Activated CD4-positive, alpha-beta memory T cell treated with anti-CD3 and anti-CD28 coated beads for 36 hours (primary cell): ENCODE measurements at regions of chr14 and their contacts with region 1.

Region 1: DNA sequence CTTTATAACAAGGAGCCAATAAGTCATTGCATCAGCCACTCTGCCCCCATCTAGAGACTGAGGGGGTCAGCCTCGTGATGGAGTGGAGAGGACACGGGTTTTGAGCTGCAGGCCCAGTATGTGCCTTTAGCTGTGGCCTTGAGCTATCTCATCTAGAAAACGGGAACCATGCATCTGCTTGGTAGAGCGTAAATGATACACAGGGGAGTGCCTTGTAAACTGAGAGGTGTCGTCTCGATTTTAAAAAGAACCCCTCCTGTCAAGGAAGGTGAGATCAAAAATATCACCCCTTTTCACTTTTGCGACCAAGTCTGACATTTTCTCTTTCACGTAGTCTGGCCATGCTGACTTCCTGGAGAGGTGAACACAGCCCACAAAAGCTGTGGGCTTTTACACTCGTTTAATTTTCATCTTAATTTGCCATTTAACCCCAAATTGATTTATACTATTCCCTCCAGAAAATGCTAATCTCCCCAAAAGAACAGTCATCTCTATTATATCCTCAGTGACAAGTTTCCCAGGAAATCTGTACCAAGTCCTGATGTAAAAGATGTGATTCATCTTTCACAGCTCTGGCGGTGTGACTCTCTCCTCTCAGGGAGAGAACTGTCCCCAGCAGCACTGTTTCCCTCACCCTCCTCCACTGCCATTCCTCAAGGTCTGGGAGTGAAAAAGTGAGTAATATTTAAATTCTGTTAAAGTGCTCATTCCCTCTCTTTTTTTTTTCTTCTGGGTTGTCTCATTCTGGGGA is 30.6 kb downstream of the VCPKMT start:
- DNase-seq: peak; percentile 70
- H3K4me3 Mint-ChIP-seq: peak overlapping the region; percentile 30
- H3K27ac Mint-ChIP-seq: peak overlapping the region; percentile 91
- H3K4me1 Mint-ChIP-seq: peaks cover 92% of the 10 kb centered on the region
- H3K27me3 Mint-ChIP-seq: no peaks in the 10 kb centered on the region

Region 2: GRCh38 chr14:49852301-49853157 is 233.2 kb before region 1 on chr14 and contains the start of gene NEMF:
- CTCF ChIA-PET with region 1: interaction called, 11 read pairs
- POLR2A ChIA-PET with region 1: interaction called, 5 read pairs
- intact Hi-C with region 1: no loop called
- DNase-seq: peak; percentile 88
- H3K4me3 Mint-ChIP-seq: peak within 1 kb of the TSS; percentile 98
- H3K27ac Mint-ChIP-seq: peak within 1 kb of the TSS; percentile 95
- H3K4me1 Mint-ChIP-seq: peaks cover 39% of the 10 kb centered on the region
- H3K27me3 Mint-ChIP-seq: no peaks in the 10 kb centered on the region
- total RNA-seq, gene NEMF: 63.6 to 71.0 TPM

Region 3: DNA sequence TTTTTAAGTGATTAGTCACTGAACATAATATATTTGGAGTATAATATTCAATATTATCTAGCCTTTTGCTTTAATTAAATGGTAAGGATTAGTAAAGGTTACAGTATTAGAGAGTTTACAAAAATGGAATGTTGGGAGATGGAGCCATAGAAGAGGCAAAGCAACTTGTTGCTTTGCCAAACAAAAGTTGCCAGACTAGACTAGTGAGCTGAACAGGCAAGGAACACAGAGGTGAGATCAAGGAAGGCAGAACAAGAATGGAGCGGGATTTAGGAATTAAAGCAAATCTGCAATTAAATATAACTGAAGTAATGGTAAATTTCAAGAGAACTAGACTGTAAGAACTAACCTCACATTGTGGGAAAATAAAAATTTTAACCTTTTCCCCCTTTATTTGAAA is 187.8 kb before region 1 on chr14:
- CTCF ChIA-PET with region 1: interaction called, 4 read pairs
- POLR2A ChIA-PET with region 1: interaction called, 15 read pairs
- intact Hi-C with region 1: loop called (anchors 1 kb)
- DNase-seq: no peak
- H3K4me3 Mint-ChIP-seq: peak overlapping the region; percentile 75
- H3K27ac Mint-ChIP-seq: peak overlapping the region; percentile 93
- H3K4me1 Mint-ChIP-seq: peaks cover 29% of the 10 kb centered on the region
- H3K27me3 Mint-ChIP-seq: no peaks in the 10 kb centered on the region

Region 4: DNA sequence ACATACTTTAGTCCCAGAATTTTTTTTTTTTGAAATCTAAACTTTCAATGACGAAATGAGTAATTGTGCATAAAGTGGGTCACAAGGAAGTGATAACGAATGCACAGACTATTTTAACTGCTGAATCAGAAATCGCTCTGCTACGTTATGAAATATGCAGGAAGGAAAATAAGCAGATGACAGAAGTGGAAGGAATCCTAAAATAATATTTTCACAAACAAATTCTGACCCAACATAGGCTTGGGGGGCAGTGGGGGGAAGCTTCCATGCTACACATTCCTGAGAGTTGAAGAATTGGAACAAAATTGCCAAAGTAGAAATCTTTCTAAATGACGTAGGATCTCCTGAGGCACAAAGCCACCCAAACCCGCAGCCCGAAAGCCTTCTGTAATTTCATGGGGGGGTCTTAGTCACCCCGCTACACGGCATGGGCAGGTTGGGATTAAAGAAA is 103.2 kb before region 1 on chr14:
- CTCF ChIA-PET with region 1: no interaction called
- POLR2A ChIA-PET with region 1: interaction called, 6 read pairs
- intact Hi-C with region 1: loop called (anchors 1 kb)
- DNase-seq: peak; percentile 44
- H3K4me3 Mint-ChIP-seq: peak overlapping the region; percentile 54
- H3K27ac Mint-ChIP-seq: peak overlapping the region; percentile 82
- H3K4me1 Mint-ChIP-seq: peaks cover 81% of the 10 kb centered on the region
- H3K27me3 Mint-ChIP-seq: no peaks in the 10 kb centered on the region

Region 5: GRCh38 chr14:50060871-50061663 is 24.7 kb before region 1 on chr14:
- CTCF ChIA-PET with region 1: interaction called, 27 read pairs
- POLR2A ChIA-PET with region 1: interaction called, 82 read pairs
- intact Hi-C with region 1: loop called (anchors 1 kb)
- DNase-seq: peak; percentile 71
- H3K4me3 Mint-ChIP-seq: peak overlapping the region; percentile 96
- H3K27ac Mint-ChIP-seq: peak overlapping the region; percentile 99
- H3K4me1 Mint-ChIP-seq: peaks cover 73% of the 10 kb centered on the region
- H3K27me3 Mint-ChIP-seq: no peaks in the 10 kb centered on the region

Region 6: DNA sequence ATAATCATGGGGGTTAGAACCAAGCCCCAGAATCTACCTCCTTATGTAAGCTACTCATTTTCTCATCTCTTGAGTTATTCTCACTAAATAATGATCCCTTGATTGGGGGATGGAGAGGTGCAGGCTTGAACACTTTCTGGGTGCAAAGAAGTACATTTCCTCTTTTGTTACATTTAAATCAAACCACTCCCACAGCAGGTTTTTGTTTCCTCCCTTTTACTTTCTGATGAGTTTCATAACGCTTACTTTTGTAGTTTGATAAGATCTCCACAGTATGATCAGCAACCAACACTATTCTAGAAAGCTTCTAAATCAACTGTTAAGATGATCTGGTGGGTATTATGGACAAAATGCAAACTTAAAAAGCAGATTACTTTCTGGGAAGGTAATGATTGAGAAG is 10.2 kb after region 1 on chr14:
- CTCF ChIA-PET with region 1: interaction called, 8 read pairs
- POLR2A ChIA-PET with region 1: interaction called, 5 read pairs
- intact Hi-C with region 1: loop called (anchors 1 kb)
- DNase-seq: no peak
- H3K4me3 Mint-ChIP-seq: peak overlapping the region; percentile 28
- H3K27ac Mint-ChIP-seq: peak overlapping the region; percentile 67
- H3K4me1 Mint-ChIP-seq: peaks cover 57% of the 10 kb centered on the region
- H3K27me3 Mint-ChIP-seq: no peaks in the 10 kb centered on the region

Region 7: DNA sequence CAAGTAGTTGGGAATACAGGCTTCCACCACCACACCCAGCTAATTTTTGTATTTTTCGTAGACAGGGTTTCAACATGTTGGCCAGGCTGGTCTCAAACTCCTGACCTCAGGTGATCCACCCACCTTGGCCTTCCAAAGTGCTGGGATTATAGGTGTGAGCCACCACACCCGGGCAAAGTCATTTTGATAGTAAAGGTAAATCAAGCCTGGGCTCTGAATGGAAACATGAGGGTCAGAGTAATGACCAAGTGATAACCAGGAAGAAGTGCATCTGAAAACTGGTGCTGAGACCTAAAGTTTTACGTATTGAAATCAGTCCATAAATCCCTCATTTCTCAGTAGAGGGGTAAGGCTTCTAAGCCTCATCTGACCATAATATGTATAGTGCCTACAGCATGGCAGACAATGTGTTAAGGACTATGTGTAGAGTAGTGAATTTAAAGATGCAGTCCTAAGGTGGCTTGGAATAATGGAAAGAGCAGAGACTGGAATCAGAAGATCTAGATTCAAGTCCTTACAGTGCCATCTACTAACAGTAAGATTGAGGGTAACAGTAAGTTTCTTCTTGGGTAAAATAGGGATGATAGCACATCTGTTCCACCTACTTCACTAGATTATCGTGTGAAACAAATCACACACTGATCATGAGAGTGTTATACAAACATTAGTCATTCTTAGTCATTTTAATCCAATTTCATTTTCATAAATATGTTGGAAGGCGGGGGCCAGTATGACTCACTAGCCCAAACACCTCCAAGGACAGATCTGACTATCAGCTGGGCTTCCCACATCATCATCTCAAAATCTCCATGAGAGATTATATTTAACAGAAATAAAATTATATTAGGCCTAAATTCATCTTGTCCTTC is 435.4 kb after region 1 on chr14:
- CTCF ChIA-PET with region 1: no interaction called
- POLR2A ChIA-PET with region 1: no interaction called
- intact Hi-C with region 1: loop called (anchors 5 kb)
- DNase-seq: peak; percentile 84
- H3K4me3 Mint-ChIP-seq: peak overlapping the region; percentile 25
- H3K27ac Mint-ChIP-seq: peak overlapping the region; percentile 85
- H3K4me1 Mint-ChIP-seq: peaks cover 56% of the 10 kb centered on the region
- H3K27me3 Mint-ChIP-seq: no peaks in the 10 kb centered on the region